IMR-90 (cell line): ENCODE measurements at regions of chr22 and their contacts with region 1.

Region 1: GRCh38 chr22:21098099-21098671 is 52.4 kb downstream of the LRRC74B start:
- DNase-seq: no peak
- ATAC-seq: no peak
- H3K4me3 ChIP-seq: no peak overlapping the region
- H3K27ac ChIP-seq: no peak overlapping the region
- H3K4me1 ChIP-seq: peaks cover 10% of the 10 kb centered on the region
- H3K27me3 ChIP-seq: peaks cover 10% of the 10 kb centered on the region
- CTCF ChIP-seq: no peak
- POLR2A ChIP-seq: no peak
- RAD21 ChIP-seq: no peak

Region 2: DNA sequence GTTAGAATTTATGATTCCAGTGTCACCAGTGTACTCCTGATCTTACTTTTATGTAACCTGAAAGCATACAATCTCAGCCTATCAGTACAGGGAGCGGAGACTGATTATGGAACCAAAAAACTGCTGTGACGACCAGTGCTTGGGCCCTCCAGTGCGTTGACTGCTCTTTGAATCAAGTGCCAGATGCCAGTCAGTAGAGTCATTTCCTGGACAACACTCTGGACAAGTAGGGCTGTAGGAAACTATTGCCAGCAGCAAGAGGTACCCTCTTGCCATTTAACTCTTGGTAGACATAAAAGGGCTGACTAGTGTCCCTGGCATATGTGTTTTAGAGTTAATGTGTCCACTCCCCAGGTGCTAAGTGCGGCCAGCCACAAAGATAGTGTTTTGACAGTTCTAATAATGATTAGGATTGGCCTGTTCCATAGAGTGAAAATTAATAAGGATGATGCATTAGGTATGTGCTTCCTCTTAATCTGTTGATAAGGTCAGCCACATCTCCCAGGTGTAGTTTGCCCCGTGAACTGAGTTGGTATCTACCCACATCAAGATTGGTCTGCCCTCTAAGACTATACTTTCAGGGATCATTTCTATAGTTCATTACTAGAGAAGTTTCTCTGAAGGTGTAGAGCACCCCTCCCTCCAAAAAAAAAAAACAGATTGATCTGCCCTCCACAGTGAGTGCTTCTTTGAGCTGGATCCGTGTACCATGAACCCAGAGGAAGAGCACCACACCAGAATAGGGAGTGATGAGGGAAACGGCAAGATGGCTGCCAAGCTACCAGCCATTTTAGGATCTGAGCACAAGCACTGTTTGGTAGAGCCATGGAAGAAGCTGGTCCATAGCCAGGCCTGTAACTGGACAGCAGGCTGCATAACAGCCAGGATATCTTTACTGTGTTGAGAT is 151.9 kb before region 1 on chr22:
- CTCF ChIA-PET with region 1: no interaction called
- POLR2A ChIA-PET with region 1: no interaction called
- dilution Hi-C with region 1: no loop called
- in situ Hi-C with region 1: no loop called
- intact Hi-C with region 1: no loop called
- DNase-seq: peak; percentile 34
- ATAC-seq: no peak; the same call in 1 of the 2 replicates
- H3K4me3 ChIP-seq: no peak overlapping the region
- H3K27ac ChIP-seq: no peak overlapping the region
- H3K4me1 ChIP-seq: peaks cover 6% of the 10 kb centered on the region
- H3K27me3 ChIP-seq: no peaks in the 10 kb centered on the region
- CTCF ChIP-seq: no peak
- POLR2A ChIP-seq: no peak
- RAD21 ChIP-seq: no peak

Region 3: DNA sequence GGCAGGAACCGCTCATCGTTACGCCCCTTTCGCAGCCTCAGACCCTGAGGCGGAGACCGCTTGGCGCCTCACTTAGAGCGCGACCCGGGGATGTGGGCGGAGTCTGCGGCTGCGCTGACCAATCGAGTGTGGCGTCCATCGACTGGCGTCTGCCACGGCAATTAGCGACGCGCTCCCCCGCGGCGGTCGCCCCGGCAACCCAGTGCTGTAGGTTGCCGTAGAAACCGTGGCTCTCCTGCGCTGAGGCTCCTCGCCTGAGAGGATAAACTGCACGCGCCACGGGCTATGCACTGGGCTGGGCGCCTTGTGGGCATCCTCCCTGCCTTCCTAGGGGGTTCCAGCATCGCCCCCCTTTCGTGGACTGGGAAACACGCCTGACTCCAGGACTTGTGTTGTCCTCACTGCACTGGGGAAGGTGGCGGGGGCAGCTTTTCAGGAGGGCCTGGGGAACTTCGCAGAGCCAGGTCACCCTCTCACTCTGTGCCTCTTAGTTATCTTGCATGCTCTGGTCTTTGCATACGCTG is 83.9 kb before region 1 on chr22:
- CTCF ChIA-PET with region 1: no interaction called
- POLR2A ChIA-PET with region 1: no interaction called
- dilution Hi-C with region 1: no loop called
- in situ Hi-C with region 1: loop called (anchors 10 kb)
- intact Hi-C with region 1: no loop called
- DNase-seq: peak; percentile 88
- ATAC-seq: peak; percentile 95
- H3K4me3 ChIP-seq: peak overlapping the region; percentile 52
- H3K27ac ChIP-seq: peak overlapping the region; percentile 88
- H3K4me1 ChIP-seq: peaks cover 14% of the 10 kb centered on the region
- H3K27me3 ChIP-seq: no peaks in the 10 kb centered on the region
- CTCF ChIP-seq: no peak
- POLR2A ChIP-seq: no peak
- RAD21 ChIP-seq: no peak

Region 4: DNA sequence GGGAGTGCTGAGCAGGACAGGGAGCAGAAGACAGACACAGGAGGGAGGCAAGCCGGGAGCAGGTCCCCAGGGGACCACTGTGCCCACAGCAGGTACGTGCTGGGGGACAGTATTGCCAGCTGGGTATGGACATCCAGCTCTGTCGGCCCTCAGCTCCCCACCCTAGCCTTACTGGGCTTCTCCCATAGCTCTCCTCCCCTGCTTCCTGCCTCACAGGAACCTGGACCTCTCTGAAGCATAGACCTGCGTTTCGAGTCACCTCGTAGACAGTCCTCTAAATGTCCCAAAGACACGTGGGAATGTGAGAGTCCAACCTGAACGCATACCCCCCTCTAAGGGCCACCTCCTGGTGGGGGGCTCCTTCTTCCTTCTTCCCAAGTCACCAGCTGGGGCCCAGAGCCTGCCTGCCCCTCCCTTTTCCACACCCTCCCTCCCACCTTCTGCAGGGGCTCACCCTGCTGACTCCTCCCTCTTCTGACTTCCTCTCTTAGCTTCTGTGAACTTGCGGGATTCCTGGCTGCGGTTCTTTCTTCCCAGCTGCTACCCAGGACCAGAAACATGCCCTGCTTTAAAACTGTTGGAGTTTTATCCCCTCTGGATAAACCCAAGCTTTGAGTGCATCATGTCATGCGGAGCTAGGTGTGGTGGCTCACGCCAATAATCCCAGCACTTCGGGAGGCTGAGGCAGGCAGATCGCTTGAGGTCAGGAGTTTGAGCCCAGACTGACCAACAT is 42.4 kb before region 1 on chr22:
- CTCF ChIA-PET with region 1: no interaction called
- POLR2A ChIA-PET with region 1: no interaction called
- dilution Hi-C with region 1: no loop called
- in situ Hi-C with region 1: no loop called
- intact Hi-C with region 1: no loop called
- DNase-seq: no peak
- ATAC-seq: no peak
- H3K4me3 ChIP-seq: no peak overlapping the region
- H3K27ac ChIP-seq: no peak overlapping the region
- H3K4me1 ChIP-seq: peaks cover 6% of the 10 kb centered on the region
- H3K27me3 ChIP-seq: peaks cover 29% of the 10 kb centered on the region
- CTCF ChIP-seq: no peak
- POLR2A ChIP-seq: no peak
- RAD21 ChIP-seq: no peak